HCT116 (cell line): ENCODE measurements at regions of chr4 and their contacts with region 1.

Region 1: GRCh38 chr4:180664766-180665368 is 1578.3 kb upstream of the TENM3 start:
- DNase-seq: peak; percentile 87
- ATAC-seq: peak; percentile 80
- H3K4me3 ChIP-seq: no peak overlapping the region; a peak in 1 of 4 replicates
- H3K27ac ChIP-seq: no peak overlapping the region
- H3K4me1 ChIP-seq: peaks cover 5 to 11% of the 10 kb centered on the region in 2 experiments; a peak in 3 of 4 replicates
- H3K27me3 ChIP-seq: no peaks in the 10 kb centered on the region
- CTCF ChIP-seq: peak; percentile 60 to 86 (median 68); a peak in 5 of 6 replicates
- POLR2A ChIP-seq: no peak
- RAD21 ChIP-seq: peak; percentile 75

Region 2: GRCh38 chr4:179867300-179867878 is 797.5 kb before region 1 on chr4:
- CTCF ChIA-PET with region 1: interaction called, 8 read pairs
- POLR2A ChIA-PET with region 1: no interaction called
- RAD21 ChIA-PET with region 1: interaction called in 1 of 2 experiments, 3 read pairs
- intact Hi-C with region 1: loop called (anchors 1 kb)
- DNase-seq: peak; percentile 80
- ATAC-seq: peak; percentile 100
- H3K4me3 ChIP-seq: no peak overlapping the region
- H3K27ac ChIP-seq: no peak overlapping the region
- H3K4me1 ChIP-seq: no peaks in the 10 kb centered on the region
- H3K27me3 ChIP-seq: no peaks in the 10 kb centered on the region
- CTCF ChIP-seq: peak; percentile 67 to 93 (median 89)
- POLR2A ChIP-seq: no peak
- RAD21 ChIP-seq: peak; percentile 77

Region 3: DNA sequence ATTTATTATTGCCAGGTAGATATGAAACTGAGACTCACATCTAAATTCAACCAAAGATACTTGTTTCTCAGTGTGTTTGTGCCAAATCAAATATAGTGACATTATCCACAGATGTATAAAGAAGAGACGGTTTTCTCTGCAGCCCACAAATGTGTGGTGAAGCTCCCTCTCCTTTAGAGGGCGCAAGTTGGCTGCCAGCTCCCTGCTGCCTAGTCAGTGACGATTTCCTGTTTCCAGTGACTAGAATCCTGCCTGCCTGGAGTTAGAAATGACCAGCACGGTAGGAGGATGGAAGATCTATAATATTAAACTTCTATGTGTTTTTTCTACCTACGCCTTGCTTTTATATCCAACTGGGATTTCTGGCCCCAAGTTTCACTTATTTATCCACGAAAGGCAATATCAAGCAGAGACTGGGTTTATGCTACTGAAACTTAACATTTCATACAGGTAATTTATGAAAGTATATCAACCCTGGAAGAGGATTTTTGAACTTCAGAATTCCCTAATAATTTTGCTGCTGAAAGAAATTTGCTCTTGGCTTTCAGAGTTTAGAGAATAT is 215.4 kb before region 1 on chr4:
- CTCF ChIA-PET with region 1: interaction called, 3 read pairs
- POLR2A ChIA-PET with region 1: no interaction called
- RAD21 ChIA-PET with region 1: no interaction called
- intact Hi-C with region 1: loop called (anchors 2 kb)
- DNase-seq: peak; percentile 66
- ATAC-seq: peak; percentile 100
- H3K4me3 ChIP-seq: peak overlapping the region; percentile 49 to 56
- H3K27ac ChIP-seq: no peak overlapping the region
- H3K4me1 ChIP-seq: no peaks in the 10 kb centered on the region
- H3K27me3 ChIP-seq: no peaks in the 10 kb centered on the region
- CTCF ChIP-seq: peak; percentile 65 to 93 (median 90); a peak in 5 of 6 replicates
- POLR2A ChIP-seq: no peak
- RAD21 ChIP-seq: peak; percentile 78

Region 4: DNA sequence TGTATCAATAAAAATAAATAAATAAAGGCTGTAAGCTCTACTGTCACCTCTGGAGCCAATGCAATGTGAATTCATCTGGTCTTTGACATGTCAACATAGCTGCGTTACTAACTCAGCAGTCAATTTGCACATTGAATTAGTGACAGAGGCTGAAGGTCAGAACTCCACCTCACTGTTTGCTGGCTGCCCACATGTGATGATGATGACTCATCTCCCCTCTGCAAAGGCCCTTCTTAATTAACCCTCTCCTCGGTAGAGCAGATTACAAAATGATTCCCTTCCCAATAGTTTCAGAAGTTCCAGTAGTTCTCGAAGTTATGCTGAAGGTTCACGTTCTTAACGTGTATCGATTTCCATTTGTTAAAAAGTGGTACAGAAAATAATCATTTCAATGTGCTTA is 47.7 kb before region 1 on chr4:
- CTCF ChIA-PET with region 1: no interaction called
- POLR2A ChIA-PET with region 1: no interaction called
- RAD21 ChIA-PET with region 1: no interaction called
- intact Hi-C with region 1: no loop called
- DNase-seq: no peak
- ATAC-seq: no peak
- H3K4me3 ChIP-seq: no peak overlapping the region
- H3K27ac ChIP-seq: no peak overlapping the region
- H3K4me1 ChIP-seq: peaks cover 2 to 7% of the 10 kb centered on the region in 2 experiments; a peak in 2 of 4 replicates
- H3K27me3 ChIP-seq: no peaks in the 10 kb centered on the region
- CTCF ChIP-seq: no peak
- POLR2A ChIP-seq: no peak
- RAD21 ChIP-seq: no peak

Region 5: GRCh38 chr4:180828440-180829018 is 163.7 kb after region 1 on chr4:
- CTCF ChIA-PET with region 1: interaction called, 6 read pairs
- POLR2A ChIA-PET with region 1: no interaction called
- RAD21 ChIA-PET with region 1: no interaction called
- intact Hi-C with region 1: loop called (anchors 5 kb)
- DNase-seq: peak; percentile 69
- ATAC-seq: peak; percentile 64
- H3K4me3 ChIP-seq: no peak overlapping the region
- H3K27ac ChIP-seq: no peak overlapping the region
- H3K4me1 ChIP-seq: peaks cover 0 to 7% of the 10 kb centered on the region in 2 experiments; a peak in 3 of 4 replicates
- H3K27me3 ChIP-seq: no peaks in the 10 kb centered on the region
- CTCF ChIP-seq: peak; percentile 52 to 82 (median 69)
- POLR2A ChIP-seq: no peak
- RAD21 ChIP-seq: peak; percentile 87

Region 6: DNA sequence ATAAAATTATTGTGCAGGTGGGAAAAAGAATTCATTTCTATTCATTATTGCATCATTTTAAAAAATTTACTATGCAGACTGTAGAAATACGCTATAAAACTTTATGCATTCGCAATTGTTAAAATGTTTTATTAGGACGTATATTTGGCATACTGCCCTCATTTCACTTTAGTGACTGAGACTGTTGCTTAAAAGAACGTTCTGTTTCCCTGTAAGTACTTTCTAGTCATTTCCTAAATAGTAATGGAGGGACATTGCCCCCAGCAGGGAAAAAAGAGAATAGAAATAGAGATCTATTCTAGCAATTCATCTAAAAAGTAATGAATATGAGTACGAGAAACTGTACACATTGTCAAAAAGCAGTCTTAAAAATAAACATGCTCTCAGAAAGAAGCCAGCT is 282.6 kb after region 1 on chr4:
- CTCF ChIA-PET with region 1: no interaction called
- POLR2A ChIA-PET with region 1: no interaction called
- RAD21 ChIA-PET with region 1: no interaction called
- intact Hi-C with region 1: loop called (anchors 2 kb)
- DNase-seq: peak; percentile 16
- ATAC-seq: 0 out of 2 replicates have a peak, but pooled peaks have one; percentile 42
- H3K4me3 ChIP-seq: no peak overlapping the region
- H3K27ac ChIP-seq: no peak overlapping the region
- H3K4me1 ChIP-seq: peaks cover 0 to 13% of the 10 kb centered on the region in 2 experiments; a peak in 2 of 4 replicates
- H3K27me3 ChIP-seq: no peaks in the 10 kb centered on the region
- CTCF ChIP-seq: peak; percentile 29 to 69 (median 57); a peak in 5 of 6 replicates
- POLR2A ChIP-seq: no peak
- RAD21 ChIP-seq: peak; percentile 73

Region 7: DNA sequence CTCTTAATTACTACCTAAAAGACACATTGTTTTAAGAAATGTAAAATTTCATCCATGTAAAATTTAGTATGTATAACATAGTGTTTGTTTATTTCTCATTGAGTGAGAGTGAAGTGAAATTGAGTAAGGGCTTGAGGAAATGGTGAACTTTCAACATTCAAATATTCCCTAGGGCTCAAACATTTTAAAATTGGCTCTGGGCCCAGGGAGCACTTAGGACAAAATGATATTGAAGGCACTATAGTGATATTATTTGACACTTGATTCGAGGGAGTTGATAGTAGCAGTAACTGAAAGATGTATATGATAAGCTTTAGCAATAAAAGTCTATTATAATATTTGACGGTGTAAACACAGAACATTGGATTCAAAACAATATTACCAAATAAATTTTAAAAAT is 334.4 kb after region 1 on chr4:
- CTCF ChIA-PET with region 1: no interaction called
- POLR2A ChIA-PET with region 1: no interaction called
- RAD21 ChIA-PET with region 1: no interaction called
- intact Hi-C with region 1: no loop called
- DNase-seq: no peak
- ATAC-seq: no peak
- H3K4me3 ChIP-seq: no peak overlapping the region
- H3K27ac ChIP-seq: no peak overlapping the region
- H3K4me1 ChIP-seq: no peaks in the 10 kb centered on the region
- H3K27me3 ChIP-seq: no peaks in the 10 kb centered on the region
- CTCF ChIP-seq: no peak
- POLR2A ChIP-seq: no peak
- RAD21 ChIP-seq: no peak

Region 8: DNA sequence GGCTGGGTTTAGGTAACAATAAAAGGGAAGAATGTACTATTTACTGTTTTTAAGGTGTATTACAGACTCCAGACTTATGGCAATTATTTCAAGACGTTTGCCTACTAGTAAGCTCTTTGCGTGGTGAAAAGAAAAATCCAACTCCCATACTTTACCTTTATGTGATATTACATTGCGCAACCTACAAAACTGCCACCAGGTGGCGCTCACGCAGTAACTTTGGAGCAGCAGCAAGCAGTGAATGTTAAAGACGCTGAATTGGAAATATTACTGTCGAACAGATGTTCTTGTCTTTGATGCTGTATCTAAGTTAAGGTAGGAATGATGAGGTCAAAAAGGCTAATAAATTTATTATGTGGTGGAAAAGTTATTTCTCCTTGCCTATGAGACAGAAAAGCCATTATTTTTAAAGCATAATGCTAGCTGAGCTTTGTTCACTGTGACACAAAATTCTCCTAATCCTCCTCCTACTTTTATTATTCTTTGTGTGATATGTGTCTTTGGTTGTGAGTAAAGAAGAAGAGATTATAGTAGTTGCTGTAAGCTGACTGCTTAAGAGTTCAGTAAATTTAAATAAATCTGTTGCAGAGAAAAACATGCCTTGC is 478.5 kb after region 1 on chr4:
- CTCF ChIA-PET with region 1: interaction called, 4 read pairs
- POLR2A ChIA-PET with region 1: no interaction called
- RAD21 ChIA-PET with region 1: no interaction called
- intact Hi-C with region 1: loop called (anchors 10 kb)
- DNase-seq: peak; percentile 56
- ATAC-seq: peak; percentile 87
- H3K4me3 ChIP-seq: no peak overlapping the region
- H3K27ac ChIP-seq: no peak overlapping the region
- H3K4me1 ChIP-seq: no peaks in the 10 kb centered on the region
- H3K27me3 ChIP-seq: peaks cover 8% of the 10 kb centered on the region; the same call in 1 of the 2 replicates
- CTCF ChIP-seq: peak; percentile 69 to 91 (median 70)
- POLR2A ChIP-seq: no peak
- RAD21 ChIP-seq: peak; percentile 87

Region 9: GRCh38 chr4:181528570-181529184 is 863.8 kb after region 1 on chr4:
- CTCF ChIA-PET with region 1: no interaction called
- POLR2A ChIA-PET with region 1: no interaction called
- RAD21 ChIA-PET with region 1: no interaction called
- intact Hi-C with region 1: loop called (anchors 2 kb)
- DNase-seq: peak; percentile 54
- ATAC-seq: peak; percentile 96
- H3K4me3 ChIP-seq: no peak overlapping the region
- H3K27ac ChIP-seq: no peak overlapping the region
- H3K4me1 ChIP-seq: no peaks in the 10 kb centered on the region
- H3K27me3 ChIP-seq: peaks cover 26% of the 10 kb centered on the region
- CTCF ChIP-seq: peak; percentile 78 to 92 (median 89)
- POLR2A ChIP-seq: no peak
- RAD21 ChIP-seq: peak; percentile 90